ENCODE measurements at regions of chrX and their contacts with region 1.

Region 1: GRCh38 chrX:14064626-14065432 is 35.1 kb upstream of the GEMIN8 start:
- DNase-seq: peak; percentile 38
- H3K4me3 ChIP-seq: no peak overlapping the region
- H3K27ac ChIP-seq: peak overlapping the region in 2 of 4 donors; percentile 28 to 45
- H3K4me1 ChIP-seq: no peaks in the 10 kb centered on the region
- H3K27me3 ChIP-seq: no peaks in the 10 kb centered on the region
- CTCF ChIP-seq: no peak
- EP300 ChIP-seq: no peak
- POLR2A ChIP-seq: no peak

Region 2: GRCh38 chrX:13966071-13966792 is 98.6 kb before region 1 on chrX:
- in situ Hi-C with region 1: no loop called
- intact Hi-C with region 1: no loop called
- DNase-seq: no peak
- H3K4me3 ChIP-seq: no peak overlapping the region
- H3K27ac ChIP-seq: no peak overlapping the region
- H3K4me1 ChIP-seq: no peaks in the 10 kb centered on the region
- H3K27me3 ChIP-seq: no peaks in the 10 kb centered on the region
- CTCF ChIP-seq: no peak
- EP300 ChIP-seq: no peak
- POLR2A ChIP-seq: no peak

Region 3: GRCh38 chrX:14501327-14501726 is 436.5 kb after region 1 on chrX:
- in situ Hi-C with region 1: loop called in 1 of 4 experiments (anchors 25 kb)
- intact Hi-C with region 1: no loop called
- DNase-seq: no peak
- H3K4me3 ChIP-seq: no peak overlapping the region
- H3K27ac ChIP-seq: no peak overlapping the region
- H3K4me1 ChIP-seq: peaks cover 0 to 9% (median 4%) of the 10 kb centered on the region in 4 donors
- H3K27me3 ChIP-seq: no peaks in the 10 kb centered on the region
- CTCF ChIP-seq: no peak
- EP300 ChIP-seq: no peak
- POLR2A ChIP-seq: no peak

Measured in transverse colon (tissue), 4 donors.